Body of pancreas (tissue), 4 donors: ENCODE measurements at regions of chr1 and their contacts with region 1.

Region 1: GRCh38 chr1:184075055-184076029 is 23.8 kb downstream of the TSEN15 start:
- DNase-seq: peak in 3 of 4 donors; percentile 18 to 56 (median 19)
- ATAC-seq: peak; percentile 67
- H3K4me3 ChIP-seq: no peak overlapping the region
- H3K27ac ChIP-seq: no peak overlapping the region
- H3K4me1 ChIP-seq: no peaks in the 10 kb centered on the region
- H3K27me3 ChIP-seq: no peaks in the 10 kb centered on the region
- CTCF ChIP-seq: peak; percentile 57 to 86 (median 77)
- POLR2A ChIP-seq: no peak

Region 2: DNA sequence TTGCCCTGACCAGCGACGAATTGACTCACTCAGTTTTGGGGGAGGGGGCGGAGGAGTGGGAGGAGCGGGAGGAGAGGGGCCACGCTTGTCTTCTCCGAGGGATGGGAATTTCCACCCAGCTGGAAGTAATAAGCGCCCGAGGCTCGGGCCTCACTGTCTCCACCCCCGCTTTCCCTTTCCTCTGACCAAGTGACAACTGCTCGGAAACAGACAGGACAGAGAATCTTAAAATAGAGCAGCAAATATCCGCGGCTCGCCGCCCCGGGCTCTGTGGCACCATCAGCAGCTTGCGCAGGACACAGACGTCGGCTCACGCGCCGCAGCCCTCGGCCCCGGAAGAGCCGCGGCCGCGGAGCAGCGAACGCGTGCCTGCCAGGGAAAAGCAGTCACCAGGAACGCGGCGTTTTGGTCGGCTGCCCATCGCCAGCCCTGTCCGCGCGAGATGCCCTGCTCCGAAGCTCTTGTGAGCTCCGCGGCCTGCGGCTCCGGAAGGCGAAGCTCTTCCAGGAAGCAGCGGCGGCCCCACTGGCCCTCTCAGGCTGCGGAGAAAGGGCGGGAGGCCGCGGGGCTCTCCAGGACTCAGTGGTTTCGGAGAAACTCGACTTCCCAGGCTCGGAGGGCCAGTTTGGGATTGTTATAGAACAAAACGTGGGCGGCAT is 1460.4 kb before region 1 on chr1:
- intact Hi-C with region 1: no loop called
- DNase-seq: peak; percentile 46 to 72 (median 64)
- ATAC-seq: peak; percentile 65
- H3K4me3 ChIP-seq: no peak overlapping the region
- H3K27ac ChIP-seq: peak overlapping the region; percentile 4 to 76 (median 48)
- H3K4me1 ChIP-seq: peaks cover 13% of the 10 kb centered on the region
- H3K27me3 ChIP-seq: no peaks in the 10 kb centered on the region
- CTCF ChIP-seq: no peak
- POLR2A ChIP-seq: peak; percentile 5 to 45 (median 23)

Region 3: DNA sequence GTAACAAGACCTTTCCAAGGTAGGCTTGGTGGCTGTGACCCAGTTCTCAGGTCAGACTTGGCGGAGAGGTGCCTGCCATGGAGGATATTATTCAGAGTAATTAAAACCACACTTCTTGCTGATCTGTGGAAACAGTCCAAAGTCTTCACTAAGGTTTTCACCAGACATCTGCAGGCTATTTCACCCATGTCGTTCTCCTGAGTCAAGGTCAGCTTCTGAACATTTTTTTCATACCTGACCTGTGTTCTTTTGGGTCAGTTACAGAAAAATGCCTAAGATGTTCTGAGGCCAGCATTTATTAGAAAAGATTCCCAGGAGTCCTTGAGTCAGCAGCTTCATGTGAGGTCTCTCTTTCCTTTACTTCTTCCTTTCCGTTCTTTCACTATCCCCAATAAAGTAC is 215.5 kb before region 1 on chr1:
- intact Hi-C with region 1: no loop called
- DNase-seq: no peak
- ATAC-seq: no peak
- H3K4me3 ChIP-seq: no peak overlapping the region
- H3K27ac ChIP-seq: no peak overlapping the region
- H3K4me1 ChIP-seq: no peaks in the 10 kb centered on the region
- H3K27me3 ChIP-seq: no peaks in the 10 kb centered on the region
- CTCF ChIP-seq: no peak
- POLR2A ChIP-seq: no peak

Region 4: DNA sequence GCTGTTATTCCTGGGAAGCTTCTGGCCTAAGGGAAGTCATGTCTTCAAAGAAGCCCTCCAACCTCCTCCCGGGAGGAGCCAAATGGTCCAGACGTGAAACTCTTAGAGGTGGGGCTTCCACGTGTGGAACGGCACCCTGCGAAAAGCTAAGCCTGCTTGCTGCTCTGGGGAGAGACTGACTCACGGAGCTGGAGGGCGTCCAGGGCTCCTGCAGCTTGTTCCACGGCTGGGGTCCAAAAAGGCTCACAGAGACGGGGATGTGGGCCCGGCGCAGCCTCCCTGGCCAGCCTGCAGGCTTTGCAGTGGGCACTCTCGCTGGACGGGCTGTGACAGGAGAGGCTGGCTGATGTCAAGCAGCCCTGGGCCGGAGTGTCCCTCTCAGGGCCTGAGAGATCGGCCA is 142.9 kb before region 1 on chr1:
- intact Hi-C with region 1: no loop called
- DNase-seq: peak in 3 of 4 donors; percentile 45 to 56 (median 45)
- ATAC-seq: peak; percentile 55
- H3K4me3 ChIP-seq: no peak overlapping the region
- H3K27ac ChIP-seq: no peak overlapping the region
- H3K4me1 ChIP-seq: no peaks in the 10 kb centered on the region
- H3K27me3 ChIP-seq: no peaks in the 10 kb centered on the region
- CTCF ChIP-seq: no peak
- POLR2A ChIP-seq: no peak

Region 5: GRCh38 chr1:184222652-184223052 is 147.3 kb after region 1 on chr1:
- intact Hi-C with region 1: loop called (anchors 10 kb)
- DNase-seq: peak; percentile 46 to 67 (median 52)
- ATAC-seq: peak; percentile 70
- H3K4me3 ChIP-seq: no peak overlapping the region
- H3K27ac ChIP-seq: no peak overlapping the region
- H3K4me1 ChIP-seq: peaks cover 5% of the 10 kb centered on the region
- H3K27me3 ChIP-seq: no peaks in the 10 kb centered on the region
- CTCF ChIP-seq: peak; percentile 70 to 95 (median 84)
- POLR2A ChIP-seq: no peak

Region 6: GRCh38 chr1:184664042-184664655 is 588.8 kb after region 1 on chr1:
- intact Hi-C with region 1: loop called (anchors 10 kb)
- DNase-seq: peak; percentile 66 to 76 (median 69)
- ATAC-seq: peak; percentile 86
- H3K4me3 ChIP-seq: no peak overlapping the region
- H3K27ac ChIP-seq: no peak overlapping the region
- H3K4me1 ChIP-seq: peaks cover 12% of the 10 kb centered on the region
- H3K27me3 ChIP-seq: no peaks in the 10 kb centered on the region
- CTCF ChIP-seq: peak; percentile 73 to 85 (median 79)
- POLR2A ChIP-seq: no peak

Region 7: GRCh38 chr1:184684285-184685074 is 609.1 kb after region 1 on chr1:
- intact Hi-C with region 1: loop called (anchors 5 kb)
- DNase-seq: peak in 3 of 4 donors; percentile 14 to 28 (median 16)
- ATAC-seq: no peak
- H3K4me3 ChIP-seq: no peak overlapping the region
- H3K27ac ChIP-seq: no peak overlapping the region
- H3K4me1 ChIP-seq: no peaks in the 10 kb centered on the region
- H3K27me3 ChIP-seq: no peaks in the 10 kb centered on the region
- CTCF ChIP-seq: no peak
- POLR2A ChIP-seq: no peak